ENCODE measurements at regions of chr19 and their contacts with region 1.

Region 1: DNA sequence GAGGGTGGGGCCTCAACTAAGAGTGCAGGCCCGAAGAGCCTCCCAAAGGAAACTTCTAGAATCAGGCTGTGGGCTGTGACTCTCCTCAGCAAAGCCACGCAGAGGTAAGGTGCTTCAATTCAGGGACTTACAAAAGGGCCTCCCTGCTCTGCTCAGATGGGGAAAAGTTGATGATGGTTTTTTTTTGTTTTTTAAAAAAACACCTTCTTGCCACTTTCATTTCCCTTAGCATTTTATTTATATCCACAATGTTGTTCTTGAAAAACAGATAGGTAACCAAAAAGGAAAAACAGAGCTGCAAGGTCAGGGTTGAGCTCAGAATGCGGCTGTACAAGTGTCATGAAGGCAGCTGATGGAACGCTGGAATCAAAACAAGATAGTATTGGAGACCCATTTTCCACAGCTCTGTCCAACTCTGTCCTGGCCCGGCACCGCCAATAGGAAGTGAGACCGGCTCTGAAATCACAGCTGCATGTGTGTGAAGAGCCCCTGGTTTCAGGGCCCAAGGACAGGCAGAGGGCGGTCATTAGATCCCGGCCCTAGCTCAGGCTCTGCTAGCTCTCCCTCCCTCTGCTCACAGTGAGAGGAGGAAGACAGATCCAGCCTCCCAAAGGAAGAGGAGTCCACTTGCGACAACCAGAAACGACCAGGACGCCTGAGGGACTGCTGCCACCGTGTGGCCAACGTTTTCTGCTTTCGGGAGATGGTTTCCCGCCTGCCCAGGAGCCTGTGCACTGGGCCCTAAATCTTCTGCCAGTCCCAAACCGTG is 58.3 kb downstream of the KLF2 start:
- DNase-seq: peak; percentile 18 to 75
- H3K4me3 ChIP-seq: no peak overlapping the region
- H3K4me1 ChIP-seq: no peaks in the 10 kb centered on the region
- H3K27me3 ChIP-seq: no peaks in the 10 kb centered on the region

Region 2: GRCh38 chr19:15815306-15815705 is 567.7 kb before region 1 on chr19 and contains the start of gene OR10H1:
- in situ Hi-C with region 1: no loop called
- DNase-seq: no peak
- H3K4me3 ChIP-seq: no peak within 1 kb of the TSS
- H3K4me1 ChIP-seq: no peaks in the 10 kb centered on the region
- H3K27me3 ChIP-seq: no peaks in the 10 kb centered on the region

Region 3: GRCh38 chr19:16247353-16248182 is 135.4 kb before region 1 on chr19:
- in situ Hi-C with region 1: loop called (anchors 5 kb)
- DNase-seq: peak; percentile 61 to 92
- H3K4me3 ChIP-seq: no peak overlapping the region
- H3K4me1 ChIP-seq: no peaks in the 10 kb centered on the region
- H3K27me3 ChIP-seq: no peaks in the 10 kb centered on the region

Region 4: DNA sequence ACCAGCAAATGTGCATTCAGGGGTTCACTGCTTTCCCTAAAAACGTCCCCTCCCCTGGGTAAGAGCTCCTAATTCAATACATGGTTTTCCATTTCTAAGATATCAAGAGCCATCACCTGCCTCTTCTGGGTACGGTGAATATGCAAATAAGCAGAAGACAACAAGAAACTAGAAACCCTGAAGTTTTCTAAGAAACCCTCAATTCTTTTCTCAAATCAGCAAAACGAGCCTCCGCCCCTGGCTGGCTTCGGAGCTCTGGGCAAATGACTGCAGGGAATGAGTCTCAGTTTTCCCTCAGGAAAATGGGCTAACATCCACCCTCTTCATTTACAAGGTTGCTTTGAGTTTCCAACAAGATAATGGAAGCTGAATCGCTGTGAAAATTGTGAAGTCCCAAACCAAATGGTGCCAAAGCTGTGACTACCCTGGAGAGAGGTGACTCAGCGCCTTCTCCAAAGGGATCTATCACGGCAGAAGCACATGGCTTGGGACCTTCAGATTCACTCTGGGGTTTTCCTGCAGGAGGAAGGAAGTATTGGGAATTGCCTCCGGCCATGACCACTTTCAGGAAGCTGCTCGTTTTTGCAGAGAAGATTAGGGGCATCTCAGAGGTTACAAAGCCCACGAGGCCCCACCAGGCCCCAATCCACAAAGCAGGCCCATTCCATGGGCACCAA is 31.7 kb before region 1 on chr19:
- in situ Hi-C with region 1: no loop called
- DNase-seq: no peak
- H3K4me3 ChIP-seq: no peak overlapping the region
- H3K4me1 ChIP-seq: no peaks in the 10 kb centered on the region
- H3K27me3 ChIP-seq: no peaks in the 10 kb centered on the region

Region 5: GRCh38 chr19:16566161-16566560 is 183.2 kb after region 1 on chr19:
- in situ Hi-C with region 1: no loop called
- DNase-seq: no peak
- H3K4me3 ChIP-seq: no peak overlapping the region
- H3K4me1 ChIP-seq: peaks cover 2% of the 10 kb centered on the region; the same call in 1 of the 2 replicates
- H3K27me3 ChIP-seq: no peaks in the 10 kb centered on the region

Measured in HAP-1 (cell line).